Head of caudate nucleus (tissue), 42 donors: ENCODE measurements at regions of chr9 and their contacts with region 1.

Region 1: GRCh38 chr9:36407122-36407723 is 7.2 kb upstream of the RNF38 start:
- DNase-seq: peak; percentile 5 to 87 (median 63)

Region 2: GRCh38 chr9:36560857-36561221 is 153.6 kb after region 1 on chr9:
- intact Hi-C with region 1: loop called (anchors 5 kb)
- DNase-seq: no peak